Colonic mucosa (tissue), 4 donors: ENCODE measurements at regions of chr5 and their contacts with region 1.

Region 1: DNA sequence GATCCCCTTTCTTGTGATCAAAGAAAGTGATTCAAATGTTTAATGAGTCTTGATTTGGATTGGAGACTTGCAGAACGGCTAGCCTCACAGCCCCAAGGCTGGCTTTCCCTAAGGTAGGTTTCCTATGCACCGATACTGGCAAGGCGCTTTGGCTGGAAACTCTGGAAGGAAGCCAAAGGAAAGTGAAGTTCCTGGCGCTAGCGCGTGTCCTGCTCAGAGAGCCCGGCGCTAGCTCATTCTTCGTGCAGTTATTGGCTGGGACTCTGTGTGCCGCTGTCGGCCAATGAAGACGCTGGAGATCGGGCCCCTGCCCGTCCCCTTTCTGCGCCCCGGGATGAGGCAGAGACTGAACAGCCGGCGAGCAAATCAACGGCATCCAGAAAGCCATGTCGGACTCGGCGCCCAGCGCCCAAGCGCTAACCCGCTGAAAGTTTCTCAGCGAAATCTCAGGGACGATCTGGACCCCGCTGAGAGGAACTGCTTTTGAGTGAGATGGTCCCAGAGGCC is at the start of gene PCDHGC3:
- DNase-seq: peak; percentile 90
- H3K4me3 ChIP-seq: peak within 1 kb of the TSS; percentile 46
- H3K27ac ChIP-seq: peak within 1 kb of the TSS; percentile 55
- H3K4me1 ChIP-seq: no peaks in the 10 kb centered on the region
- H3K27me3 ChIP-seq: no peaks in the 10 kb centered on the region
- CTCF ChIP-seq: peak; percentile 26
- total RNA-seq, gene PCDHGC3: 13.1 to 22.2 TPM

Region 2: GRCh38 chr5:141260458-141261237 is 215.0 kb before region 1 on chr5:
- intact Hi-C with region 1: no loop called
- DNase-seq: no peak
- H3K4me3 ChIP-seq: no peak overlapping the region
- H3K27ac ChIP-seq: no peak overlapping the region
- H3K4me1 ChIP-seq: no peaks in the 10 kb centered on the region
- H3K27me3 ChIP-seq: no peaks in the 10 kb centered on the region
- CTCF ChIP-seq: no peak

Region 3: GRCh38 chr5:141514330-141515133 is 38.9 kb after region 1 on chr5:
- intact Hi-C with region 1: loop called (anchors 5 kb)
- DNase-seq: no peak
- H3K4me3 ChIP-seq: no peak overlapping the region
- H3K27ac ChIP-seq: peak overlapping the region; percentile 70
- H3K4me1 ChIP-seq: peaks cover 8% of the 10 kb centered on the region
- H3K27me3 ChIP-seq: no peaks in the 10 kb centered on the region
- CTCF ChIP-seq: no peak